ENCODE measurements at regions of chr12 and their contacts with region 1.

Region 1: GRCh38 chr12:48189331-48190125 is 6.1 kb downstream of the CCDC184 start:
- DNase-seq: peak; percentile 79
- ATAC-seq: peak; percentile 76
- H3K4me3 Mint-ChIP-seq: no peak overlapping the region
- H3K27ac Mint-ChIP-seq: no peak overlapping the region
- H3K4me1 Mint-ChIP-seq: peaks cover 15% of the 10 kb centered on the region
- H3K27me3 Mint-ChIP-seq: peaks cover 90% of the 10 kb centered on the region
- CTCF ChIP-seq: peak; percentile 63

Region 2: DNA sequence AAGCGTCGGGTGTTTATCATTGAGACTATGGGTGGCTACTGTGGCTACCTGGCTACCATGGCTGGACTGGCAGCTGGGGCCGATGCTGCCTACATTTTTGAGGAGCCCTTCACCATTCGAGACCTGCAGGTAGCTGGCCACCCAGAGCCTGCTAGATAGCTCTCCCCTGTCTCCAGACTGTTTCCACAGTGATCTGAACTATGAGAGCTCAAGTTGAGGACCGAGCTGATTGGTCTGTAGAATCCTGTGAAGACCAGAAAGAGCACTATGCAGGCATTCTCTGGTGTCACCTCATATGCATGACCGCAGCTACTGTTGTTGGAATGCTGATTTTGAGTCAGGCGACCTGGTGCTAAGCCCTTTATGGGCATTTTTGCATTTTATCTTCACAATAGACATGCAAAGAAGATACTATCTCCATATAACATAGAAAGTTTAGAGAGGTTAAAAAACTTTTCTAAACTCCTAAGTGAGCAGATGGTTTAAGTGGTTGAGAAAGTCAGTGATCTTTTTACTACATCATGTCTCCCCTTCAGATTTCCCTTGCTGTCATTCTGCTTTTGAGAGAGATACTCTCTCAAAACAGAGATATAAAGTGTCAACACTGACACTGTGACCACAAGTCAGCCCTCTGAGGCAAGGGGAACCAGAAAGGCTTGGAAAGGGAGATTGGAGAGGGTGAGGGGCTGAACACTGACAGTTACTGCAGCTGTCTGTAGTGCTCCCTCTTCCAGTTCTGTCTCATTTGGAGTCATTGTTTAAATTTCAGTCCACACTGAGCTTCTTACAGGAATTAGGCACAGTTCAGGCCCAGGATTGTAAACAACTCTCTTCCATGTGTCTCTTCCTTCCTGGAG is 46.5 kb before region 1 on chr12:
- CTCF ChIA-PET with region 1: interaction called, 10 read pairs
- POLR2A ChIA-PET with region 1: no interaction called
- DNase-seq: peak; percentile 16
- ATAC-seq: peak; percentile 92
- H3K4me3 Mint-ChIP-seq: peak overlapping the region; percentile 29
- H3K27ac Mint-ChIP-seq: peak overlapping the region; percentile 95
- H3K4me1 Mint-ChIP-seq: peaks cover 42% of the 10 kb centered on the region
- H3K27me3 Mint-ChIP-seq: no peaks in the 10 kb centered on the region
- CTCF ChIP-seq: no peak

Region 3: DNA sequence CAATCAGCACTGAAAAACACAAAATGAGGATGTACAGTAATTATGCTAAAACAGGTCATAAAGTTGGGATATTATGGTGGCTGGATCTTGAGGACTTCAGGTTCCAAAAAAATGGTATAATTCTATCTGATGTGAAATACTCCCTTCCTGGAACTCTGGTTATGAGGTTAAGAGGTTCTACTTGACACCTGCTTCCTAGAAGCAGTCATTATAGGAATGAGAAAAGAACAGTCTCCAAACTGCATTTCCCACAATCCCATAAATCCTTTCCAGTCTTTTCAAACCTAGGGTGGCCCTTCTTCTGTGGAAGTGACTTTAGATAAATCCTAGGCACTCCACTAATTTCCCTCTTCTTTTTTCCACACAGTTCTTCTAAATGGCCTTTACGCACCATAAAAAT is 77.3 kb after region 1 on chr12:
- CTCF ChIA-PET with region 1: no interaction called
- POLR2A ChIA-PET with region 1: no interaction called
- DNase-seq: no peak
- ATAC-seq: no peak
- H3K4me3 Mint-ChIP-seq: no peak overlapping the region
- H3K27ac Mint-ChIP-seq: no peak overlapping the region
- H3K4me1 Mint-ChIP-seq: no peaks in the 10 kb centered on the region
- H3K27me3 Mint-ChIP-seq: peaks cover 77% of the 10 kb centered on the region
- CTCF ChIP-seq: no peak

Region 4: DNA sequence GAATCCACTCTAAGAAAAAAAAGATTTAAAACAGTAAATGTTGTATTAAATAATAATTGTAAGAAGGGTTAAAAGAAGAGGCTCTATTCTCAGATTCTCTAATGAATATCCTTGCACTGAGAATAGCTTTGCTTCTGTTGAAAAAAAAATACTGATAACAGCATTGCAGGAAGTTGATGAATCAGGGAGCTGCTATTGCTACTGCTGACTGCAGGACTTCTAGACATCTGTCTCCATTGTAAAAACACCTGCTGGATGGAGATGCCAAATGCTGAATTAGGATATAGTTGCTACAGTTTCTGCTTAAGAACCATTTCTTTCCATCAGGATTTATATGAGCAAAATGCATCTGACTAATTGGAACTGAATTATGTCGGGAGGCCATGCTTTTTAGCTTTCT is 232.5 kb after region 1 on chr12:
- CTCF ChIA-PET with region 1: no interaction called
- POLR2A ChIA-PET with region 1: no interaction called
- DNase-seq: no peak
- ATAC-seq: no peak
- H3K4me3 Mint-ChIP-seq: no peak overlapping the region
- H3K27ac Mint-ChIP-seq: no peak overlapping the region
- H3K4me1 Mint-ChIP-seq: peaks cover 17% of the 10 kb centered on the region
- H3K27me3 Mint-ChIP-seq: peaks cover 93% of the 10 kb centered on the region
- CTCF ChIP-seq: no peak

Measured in WTC11 (cell line).